Spleen (tissue), 13 donors: ENCODE measurements at regions of chr5 and their contacts with region 1.

Region 1: DNA sequence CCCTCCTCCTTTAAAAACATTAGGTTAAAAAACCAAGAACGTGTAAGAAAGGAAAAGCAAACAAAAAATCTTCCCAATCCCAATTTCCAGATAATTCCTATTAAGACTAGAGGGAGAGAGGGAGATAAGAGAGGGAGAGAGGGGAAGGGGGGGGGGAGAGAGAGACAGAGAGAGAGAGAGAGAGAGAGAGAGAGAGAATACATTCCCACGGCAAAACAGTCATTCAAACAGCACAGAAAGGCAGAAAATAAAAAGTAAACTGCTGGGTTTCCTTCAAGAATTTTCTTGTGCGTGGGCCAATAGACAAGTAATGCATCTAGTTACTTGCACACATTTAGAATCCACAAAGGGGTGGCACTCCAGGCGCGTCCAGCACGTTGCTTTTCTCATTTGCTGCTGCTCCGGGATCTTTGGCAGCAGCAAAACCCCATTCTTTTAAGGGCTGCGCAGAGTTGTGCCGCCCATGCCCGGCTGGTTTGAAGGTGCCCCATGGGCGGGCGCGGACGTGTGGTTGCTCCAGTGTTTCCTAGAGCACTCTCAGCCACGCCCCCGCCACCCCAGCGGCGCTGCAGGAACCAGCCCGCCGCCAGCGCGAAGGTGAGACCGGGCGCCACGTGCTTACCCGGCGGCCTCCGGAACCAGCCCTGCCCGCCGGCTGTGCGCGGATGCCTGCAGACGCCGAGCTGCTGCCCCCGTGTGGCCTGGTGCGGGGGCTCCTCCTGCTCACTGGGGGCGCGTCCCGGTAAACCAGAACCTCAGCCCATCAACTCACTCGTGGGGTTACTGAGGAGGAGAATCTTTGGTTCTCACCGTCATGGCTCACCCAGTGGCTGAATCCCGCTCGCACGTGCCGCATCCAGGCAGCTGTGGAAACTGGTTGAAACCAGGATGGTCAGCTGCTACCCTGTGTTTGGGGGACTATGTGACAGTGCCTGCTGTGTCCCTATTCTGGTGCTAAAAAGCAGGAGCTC is 44.6 kb downstream of the STC2 start:
- DNase-seq: peak; percentile 89
- H3K4me3 ChIP-seq: peak overlapping the region in 4 of 8 donors; percentile 11 to 46 (median 20)
- H3K27ac ChIP-seq: no peak overlapping the region
- H3K4me1 ChIP-seq: peaks cover 0 to 14% (median 8%) of the 10 kb centered on the region in 6 donors
- H3K27me3 ChIP-seq: peaks cover 0 to 81% (median 14%) of the 10 kb centered on the region in 7 donors
- CTCF ChIP-seq: peak; percentile 22 to 78 (median 65)
- POLR2A ChIP-seq: no peak

Region 2: DNA sequence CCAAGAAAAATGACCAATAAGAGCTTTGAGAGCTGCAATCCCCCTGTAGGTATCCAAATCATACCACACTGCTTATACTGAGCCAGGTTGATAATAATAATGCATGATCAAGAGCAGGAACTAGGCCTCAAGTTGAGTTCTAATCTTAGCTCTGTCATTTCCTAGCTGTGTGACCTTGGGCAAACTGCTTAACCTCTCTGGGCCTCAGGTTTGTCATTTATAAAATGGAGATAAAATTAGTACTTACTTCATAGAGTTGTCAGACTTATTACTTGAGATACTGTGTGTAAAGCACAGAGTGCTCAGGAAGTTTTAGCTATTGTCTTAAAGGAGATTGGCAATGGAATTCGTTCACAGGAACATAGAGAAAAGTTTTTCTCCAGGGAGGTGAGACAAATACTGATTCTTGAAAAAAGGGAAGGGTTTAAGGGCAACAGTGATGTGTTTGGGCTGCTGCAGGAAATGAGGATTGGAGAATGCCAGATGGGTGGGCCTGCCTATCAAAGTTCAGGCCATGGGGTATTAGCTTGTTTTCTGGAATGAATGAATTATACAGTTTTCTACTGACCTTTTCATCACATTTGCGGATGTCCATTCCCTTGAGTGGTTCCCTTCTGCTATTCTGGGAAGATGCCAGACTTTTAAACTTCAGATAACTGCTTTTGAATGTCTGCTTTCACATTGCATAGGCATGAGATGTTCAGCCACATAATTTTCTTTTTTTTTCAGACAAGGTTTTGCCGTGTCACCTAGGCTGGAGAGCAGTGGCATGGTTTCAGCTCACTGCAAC is 310.3 kb before region 1 on chr5:
- intact Hi-C with region 1: loop called (anchors 10 kb)
- DNase-seq: no peak
- H3K4me3 ChIP-seq: no peak overlapping the region
- H3K27ac ChIP-seq: peak overlapping the region in 4 of 8 donors; percentile 16 to 39 (median 32)
- H3K4me1 ChIP-seq: peaks cover 0 to 29% (median 13%) of the 10 kb centered on the region in 6 donors
- H3K27me3 ChIP-seq: peaks cover 0 to 2% (median 0%) of the 10 kb centered on the region in 7 donors
- CTCF ChIP-seq: no peak
- POLR2A ChIP-seq: no peak